BJ (cell line): ENCODE measurements at regions of chr9 and their contacts with region 1.

Region 1: DNA sequence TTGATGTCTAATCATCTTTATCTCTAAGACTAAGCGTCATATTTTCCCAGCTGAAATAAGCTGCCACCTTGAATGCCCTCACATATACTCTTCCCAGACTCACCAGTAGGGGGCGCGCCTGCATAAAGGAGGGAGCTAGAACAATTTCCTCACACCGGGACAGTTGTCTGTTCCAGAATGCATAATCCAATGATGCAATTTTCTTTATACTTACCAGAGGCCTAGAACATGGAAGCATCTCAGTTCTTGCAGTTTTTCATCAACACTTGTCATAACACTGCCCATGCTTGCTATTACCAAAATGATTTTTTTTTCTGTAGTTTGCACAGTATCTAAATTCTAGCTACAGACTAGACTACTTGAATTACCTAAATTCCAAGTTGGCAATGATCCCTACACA is 203.9 kb downstream of the FRMD3 start:
- DNase-seq: peak; percentile 40
- H3K4me3 ChIP-seq: no peak overlapping the region
- H3K27me3 ChIP-seq: no peaks in the 10 kb centered on the region
- CTCF ChIP-seq: peak; percentile 84

Region 2: GRCh38 chr9:83312537-83312936 is 21.8 kb before region 1 on chr9:
- CTCF ChIA-PET with region 1: interaction called, 12 read pairs
- POLR2A ChIA-PET with region 1: no interaction called
- DNase-seq: no peak
- H3K4me3 ChIP-seq: no peak overlapping the region
- H3K27me3 ChIP-seq: no peaks in the 10 kb centered on the region
- CTCF ChIP-seq: no peak

Region 3: GRCh38 chr9:83538172-83538889 is 204.0 kb after region 1 on chr9 and contains the start of gene FRMD3:
- CTCF ChIA-PET with region 1: interaction called, 73 read pairs
- POLR2A ChIA-PET with region 1: no interaction called
- DNase-seq: peak; percentile 11
- H3K4me3 ChIP-seq: peak within 1 kb of the TSS; percentile 57
- H3K27me3 ChIP-seq: peaks cover 10% of the 10 kb centered on the region
- CTCF ChIP-seq: peak; percentile 77
- polyA plus RNA-seq, gene FRMD3: 0.10 and 0.15 TPM in 2 replicates

Region 4: DNA sequence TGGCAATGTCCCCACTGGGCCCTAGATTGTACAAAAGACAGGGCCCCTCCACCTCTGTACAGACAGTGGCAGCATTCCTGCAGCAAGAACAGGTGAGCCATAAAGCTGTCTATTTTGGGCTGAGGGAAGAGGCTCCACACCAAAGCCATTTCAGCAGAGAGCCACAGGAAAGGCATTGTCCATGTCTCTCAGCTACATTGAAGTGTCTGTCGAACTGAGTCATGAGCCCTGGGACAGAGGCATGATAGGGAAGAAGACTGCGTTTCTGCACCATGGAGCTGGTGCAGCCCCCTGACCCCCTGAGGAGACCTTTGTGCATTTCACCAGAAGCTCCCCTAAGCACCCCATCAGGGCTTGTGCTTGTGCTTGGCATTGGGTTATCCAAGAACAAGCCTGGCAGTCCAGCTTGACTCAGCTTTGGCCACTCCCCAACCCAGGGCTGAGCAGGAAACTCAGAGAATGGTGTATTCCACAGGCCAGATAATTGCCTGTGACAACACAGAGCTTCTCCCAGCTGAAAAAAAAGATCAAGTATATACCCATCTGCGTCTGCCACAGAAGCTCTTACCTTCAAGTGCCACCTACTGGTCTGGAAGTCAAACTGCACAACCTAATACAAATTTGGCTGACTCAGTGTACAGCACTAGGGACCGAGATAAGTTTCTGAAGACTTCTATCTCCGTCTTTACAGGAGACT is 209.8 kb after region 1 on chr9:
- CTCF ChIA-PET with region 1: interaction called, 73 read pairs
- POLR2A ChIA-PET with region 1: no interaction called
- DNase-seq: peak; percentile 41
- H3K4me3 ChIP-seq: no peak overlapping the region
- H3K27me3 ChIP-seq: peaks cover 2% of the 10 kb centered on the region
- CTCF ChIP-seq: peak; percentile 77